Activated CD4-positive, alpha-beta T cell treated with anti-CD3 and anti-CD28 coated beads for 36 hours (primary cell): ENCODE measurements at regions of chr2 and their contacts with region 1.

Region 1: DNA sequence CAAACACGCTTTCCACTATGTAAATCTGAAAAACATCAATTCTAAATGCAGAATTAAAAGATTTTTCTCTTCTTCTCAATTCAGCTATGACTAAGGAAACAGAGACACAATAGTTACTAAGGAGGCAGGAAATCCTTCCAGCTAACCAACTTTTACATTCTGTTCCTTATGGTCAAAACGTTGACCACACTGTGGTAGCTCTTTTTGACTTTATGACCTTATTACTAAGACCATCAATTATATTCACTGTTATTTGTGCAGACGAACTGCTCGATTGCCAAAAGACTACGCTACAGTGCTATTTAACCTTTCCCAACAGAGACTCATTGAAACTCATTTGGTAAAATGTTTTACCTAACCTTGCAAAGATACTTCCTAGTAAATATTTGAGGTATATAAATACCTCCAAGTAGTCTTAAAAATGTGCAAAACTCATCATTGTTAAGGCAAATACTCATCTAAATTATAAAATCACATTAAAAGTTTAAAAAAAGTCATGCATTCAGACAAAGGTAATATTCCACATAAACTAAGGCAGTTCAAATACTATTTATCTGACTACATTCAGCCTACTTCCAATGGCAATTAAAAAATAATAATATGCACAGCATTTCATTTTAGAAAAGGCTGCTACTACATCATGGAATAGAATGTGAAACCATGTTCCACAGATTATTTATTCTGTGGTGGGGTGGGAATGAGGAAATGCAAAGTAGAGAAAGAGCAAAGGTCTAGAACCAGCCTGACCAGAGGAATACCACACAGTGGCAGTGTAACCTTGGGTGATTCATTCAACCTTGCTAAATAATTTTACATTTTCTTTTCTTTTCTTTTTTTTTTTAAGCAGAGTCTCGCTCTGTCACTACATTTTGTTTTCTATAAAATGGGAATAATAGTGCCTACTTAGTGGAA is 139.9 kb downstream of the THADA start:
- DNase-seq: no peak
- ATAC-seq: no peak
- H3K4me3 Mint-ChIP-seq: no peak overlapping the region
- H3K27ac Mint-ChIP-seq: no peak overlapping the region
- H3K4me1 Mint-ChIP-seq: peaks cover 5% of the 10 kb centered on the region
- H3K27me3 Mint-ChIP-seq: no peaks in the 10 kb centered on the region

Region 2: DNA sequence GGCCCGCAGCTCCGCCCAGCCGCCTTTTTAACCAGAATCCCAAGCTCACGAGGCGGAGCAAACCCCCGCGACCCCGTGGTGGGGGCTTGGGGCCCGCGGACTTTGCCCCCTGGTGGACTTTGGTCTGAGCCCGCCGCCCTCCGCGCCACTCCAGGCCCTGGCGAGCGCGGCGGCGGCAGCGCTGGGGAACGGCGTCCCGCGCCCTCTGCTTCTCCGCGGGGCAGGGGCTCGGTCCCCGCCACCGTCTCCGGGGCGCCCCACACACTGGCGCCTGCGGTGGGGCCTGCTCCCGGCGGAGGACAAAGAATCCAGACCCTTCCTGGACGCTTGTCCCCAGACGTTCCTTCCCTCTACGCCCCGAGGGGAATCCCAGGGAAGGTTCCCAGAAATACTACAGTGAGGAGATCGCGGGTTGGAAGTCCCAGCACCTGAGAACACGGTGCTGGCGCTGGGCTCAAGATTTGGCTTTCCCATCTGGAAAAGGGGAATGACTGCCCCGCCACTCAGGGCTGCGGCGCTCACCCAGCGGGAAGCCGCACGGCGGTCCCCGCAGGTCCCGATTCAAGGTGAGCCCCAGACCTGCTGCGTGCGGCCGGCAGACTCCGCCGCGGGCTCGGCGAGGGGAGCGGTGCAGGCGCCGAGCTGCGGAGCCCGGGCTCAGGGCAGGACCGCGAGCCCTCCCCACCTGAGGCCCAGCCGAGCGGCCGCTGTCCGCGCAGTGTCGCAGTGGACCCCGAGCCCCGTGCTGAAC is 663.2 kb before region 1 on chr2 and contains the start of gene HAAO:
- CTCF ChIA-PET with region 1: no interaction called
- POLR2A ChIA-PET with region 1: no interaction called
- intact Hi-C with region 1: no loop called
- DNase-seq: peak; percentile 30
- ATAC-seq: peak; percentile 50
- H3K4me3 Mint-ChIP-seq: peak within 1 kb of the TSS; percentile 70
- H3K27ac Mint-ChIP-seq: peak within 1 kb of the TSS; percentile 66
- H3K4me1 Mint-ChIP-seq: peaks cover 37% of the 10 kb centered on the region
- H3K27me3 Mint-ChIP-seq: peaks cover 39% of the 10 kb centered on the region
- total RNA-seq, gene HAAO: 0.86 to 1.2 TPM

Region 3: DNA sequence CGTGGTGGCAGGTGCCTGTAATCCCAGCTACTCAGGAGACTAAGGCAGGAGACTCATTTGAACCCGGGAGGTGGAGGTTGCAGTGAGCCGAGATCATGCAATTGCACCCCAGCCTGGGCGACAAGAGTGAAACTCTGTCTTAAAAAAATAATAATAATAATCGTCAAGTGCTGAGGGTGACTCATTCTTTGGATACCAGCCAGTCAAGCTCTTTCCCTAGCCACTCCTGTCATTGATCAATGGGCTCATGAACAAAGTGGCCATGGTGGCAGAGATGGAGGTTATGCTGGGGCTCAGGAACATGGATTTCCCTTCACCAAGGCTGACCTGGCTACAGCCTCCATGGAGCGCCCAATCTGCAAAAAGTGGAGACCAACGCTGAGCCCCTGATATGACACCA is 569.1 kb before region 1 on chr2:
- CTCF ChIA-PET with region 1: no interaction called
- POLR2A ChIA-PET with region 1: no interaction called
- intact Hi-C with region 1: no loop called
- DNase-seq: no peak
- ATAC-seq: no peak
- H3K4me3 Mint-ChIP-seq: no peak overlapping the region
- H3K27ac Mint-ChIP-seq: no peak overlapping the region
- H3K4me1 Mint-ChIP-seq: peaks cover 7% of the 10 kb centered on the region
- H3K27me3 Mint-ChIP-seq: no peaks in the 10 kb centered on the region

Region 4: GRCh38 chr2:43435746-43436145 is 20.2 kb before region 1 on chr2:
- CTCF ChIA-PET with region 1: no interaction called
- POLR2A ChIA-PET with region 1: no interaction called
- intact Hi-C with region 1: loop called in 1 of 2 experiments (anchors 2 kb)
- DNase-seq: no peak
- ATAC-seq: no peak
- H3K4me3 Mint-ChIP-seq: no peak overlapping the region
- H3K27ac Mint-ChIP-seq: no peak overlapping the region
- H3K4me1 Mint-ChIP-seq: no peaks in the 10 kb centered on the region
- H3K27me3 Mint-ChIP-seq: no peaks in the 10 kb centered on the region